Ovary (tissue), 10 donors: ENCODE measurements at regions of chrX and their contacts with region 1.

Region 1: GRCh38 chrX:110172215-110172614 is 145.7 kb downstream of the AMMECR1 start:
- DNase-seq: no peak
- H3K4me3 ChIP-seq: no peak overlapping the region
- H3K27ac ChIP-seq: peak overlapping the region in 1 of 2 donors; percentile 53
- H3K4me1 ChIP-seq: peaks cover 12% of the 10 kb centered on the region
- H3K27me3 ChIP-seq: no peaks in the 10 kb centered on the region
- CTCF ChIP-seq: no peak
- EP300 ChIP-seq: no peak
- POLR2A ChIP-seq: no peak

Region 2: DNA sequence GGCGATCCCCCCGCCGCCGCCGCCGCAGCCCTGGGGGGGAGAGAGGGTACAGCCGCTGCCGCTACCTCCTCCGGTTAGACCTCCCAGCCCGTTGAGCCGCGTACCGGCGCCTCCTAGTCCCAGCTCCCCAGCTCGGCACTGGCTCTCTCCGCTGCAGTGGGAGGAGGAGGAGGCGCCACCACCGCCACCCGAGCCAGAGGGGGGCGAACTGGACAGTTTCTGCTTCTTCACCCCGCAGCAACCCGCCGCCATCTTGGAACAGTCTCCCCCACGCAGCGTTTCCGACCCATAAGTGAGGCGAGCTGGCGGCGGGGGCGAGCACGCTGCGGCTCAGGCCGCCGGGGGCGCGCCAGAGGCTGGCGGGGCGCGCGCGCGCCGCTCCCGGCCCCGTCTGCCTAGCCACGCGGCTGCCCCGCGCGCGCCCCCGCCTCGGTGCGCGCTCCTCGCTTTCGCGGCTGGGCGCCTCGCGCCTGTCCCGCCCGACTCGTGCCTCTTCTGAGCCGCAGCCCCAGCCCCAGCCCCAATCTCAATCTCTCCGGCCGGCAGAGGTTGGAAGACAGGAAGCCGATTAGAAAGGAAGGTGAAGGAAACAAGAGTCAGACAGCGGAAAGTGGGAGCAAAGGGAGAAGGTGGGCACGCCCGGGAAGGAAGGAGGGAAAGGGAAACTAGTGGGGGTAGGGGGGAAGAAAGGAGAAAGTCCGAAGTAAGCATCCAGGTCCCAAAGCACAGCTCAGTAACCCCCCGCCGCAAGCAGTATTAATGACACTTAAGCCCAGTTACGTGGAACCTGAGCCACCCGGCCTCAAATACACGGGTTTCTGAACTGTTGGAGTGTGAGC is 145.8 kb after region 1 on chrX and contains the start of gene AMMECR1:
- intact Hi-C with region 1: loop called in 2 of 4 experiments (anchors 5 to 10 kb)
- DNase-seq: peak; percentile 80 to 87 (median 83)
- H3K4me3 ChIP-seq: peak within 1 kb of the TSS; percentile 84
- H3K27ac ChIP-seq: peak within 1 kb of the TSS; percentile 89 to 92
- H3K4me1 ChIP-seq: no peaks in the 10 kb centered on the region
- H3K27me3 ChIP-seq: no peaks in the 10 kb centered on the region
- CTCF ChIP-seq: no peak
- EP300 ChIP-seq: no peak
- POLR2A ChIP-seq: peak; percentile 27
- total RNA-seq, gene AMMECR1: 6.0 to 19.2 (median 13.2) TPM

Region 3: DNA sequence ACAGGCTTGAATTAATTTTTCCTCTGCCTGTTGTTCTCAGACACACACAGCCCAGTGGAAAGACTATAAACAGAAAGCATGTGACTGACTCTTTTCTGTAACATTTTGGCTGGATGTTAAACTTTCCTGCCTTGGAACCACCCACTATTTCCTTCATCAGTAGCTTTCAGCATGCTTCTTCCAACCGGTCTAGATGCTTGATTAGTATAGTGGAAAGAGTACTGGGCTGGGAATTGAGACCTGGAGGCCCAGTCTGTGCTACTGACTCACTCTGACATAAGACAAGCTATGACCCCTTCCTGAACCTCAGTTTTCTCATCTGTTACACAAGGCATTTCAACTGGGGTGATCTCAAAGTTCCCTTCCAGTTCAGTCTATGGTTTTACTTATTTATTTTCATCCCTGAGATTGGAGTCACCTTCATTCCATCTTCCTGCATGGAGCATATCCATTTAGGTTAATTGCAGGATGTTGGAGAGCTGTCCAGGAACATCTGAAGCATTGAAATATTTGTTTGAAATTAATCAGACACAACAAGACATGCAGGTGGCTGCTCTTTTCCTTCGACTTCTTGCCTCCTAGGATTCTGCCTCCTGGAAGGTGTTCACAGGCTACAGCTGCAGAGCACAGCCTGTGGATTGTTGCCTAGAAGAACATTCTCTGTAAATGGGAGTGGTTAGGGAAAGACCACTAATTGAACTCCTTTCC is 359.8 kb after region 1 on chrX:
- intact Hi-C with region 1: no loop called
- DNase-seq: no peak
- H3K4me3 ChIP-seq: no peak overlapping the region
- H3K27ac ChIP-seq: no peak overlapping the region
- H3K4me1 ChIP-seq: no peaks in the 10 kb centered on the region
- H3K27me3 ChIP-seq: no peaks in the 10 kb centered on the region
- CTCF ChIP-seq: no peak
- EP300 ChIP-seq: no peak
- POLR2A ChIP-seq: no peak